ENCODE measurements at regions of chr10 and their contacts with region 1.

Region 1: DNA sequence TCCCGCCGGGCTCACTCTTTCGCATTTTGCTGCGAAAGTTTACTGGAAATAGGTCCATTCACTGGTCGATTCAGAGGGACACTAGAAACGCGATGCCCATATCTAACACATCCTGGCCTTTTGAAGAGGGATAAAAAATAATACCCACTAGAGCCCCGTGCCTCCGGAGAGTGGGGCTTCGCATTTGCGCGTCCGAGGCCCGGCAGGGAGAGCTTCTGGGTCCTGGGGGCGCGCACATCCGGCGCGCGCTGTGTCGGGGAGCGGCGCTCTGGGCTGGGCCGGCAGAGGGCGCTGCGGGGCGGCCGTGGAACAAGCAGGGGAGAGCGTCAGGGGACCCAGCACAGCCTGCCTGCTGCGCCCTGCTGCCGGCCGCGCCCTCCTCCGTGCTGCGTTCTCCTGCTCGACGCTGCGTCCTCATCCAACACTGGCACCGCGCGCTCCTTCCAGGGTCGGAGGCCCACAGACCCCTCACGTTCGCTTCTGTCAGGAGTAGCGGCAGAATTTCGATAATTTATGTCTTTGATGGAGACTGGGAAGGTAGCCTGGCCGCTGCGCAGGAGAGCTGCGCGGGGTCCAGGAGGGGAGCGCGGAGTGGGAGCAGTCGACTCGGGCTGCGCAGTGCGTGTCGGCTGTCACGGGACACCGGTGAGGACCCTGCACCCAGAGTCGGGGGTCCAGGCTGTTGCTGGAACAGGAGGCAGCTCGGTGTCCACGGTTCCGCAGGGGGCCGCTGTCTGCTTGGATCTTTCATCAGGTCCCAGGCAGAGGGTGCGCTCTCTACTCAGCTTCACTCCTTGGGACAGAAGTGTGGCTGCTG is 41.5 kb upstream of the ZNF32 start:
- DNase-seq: no peak
- H3K4me3 ChIP-seq: peak overlapping the region; percentile 69
- CTCF ChIP-seq: peak; percentile 90

Region 2: GRCh38 chr10:42911359-42911758 is 778.8 kb before region 1 on chr10:
- CTCF ChIA-PET with region 1: no interaction called
- POLR2A ChIA-PET with region 1: no interaction called
- DNase-seq: no peak
- H3K4me3 ChIP-seq: no peak overlapping the region
- CTCF ChIP-seq: no peak

Region 3: DNA sequence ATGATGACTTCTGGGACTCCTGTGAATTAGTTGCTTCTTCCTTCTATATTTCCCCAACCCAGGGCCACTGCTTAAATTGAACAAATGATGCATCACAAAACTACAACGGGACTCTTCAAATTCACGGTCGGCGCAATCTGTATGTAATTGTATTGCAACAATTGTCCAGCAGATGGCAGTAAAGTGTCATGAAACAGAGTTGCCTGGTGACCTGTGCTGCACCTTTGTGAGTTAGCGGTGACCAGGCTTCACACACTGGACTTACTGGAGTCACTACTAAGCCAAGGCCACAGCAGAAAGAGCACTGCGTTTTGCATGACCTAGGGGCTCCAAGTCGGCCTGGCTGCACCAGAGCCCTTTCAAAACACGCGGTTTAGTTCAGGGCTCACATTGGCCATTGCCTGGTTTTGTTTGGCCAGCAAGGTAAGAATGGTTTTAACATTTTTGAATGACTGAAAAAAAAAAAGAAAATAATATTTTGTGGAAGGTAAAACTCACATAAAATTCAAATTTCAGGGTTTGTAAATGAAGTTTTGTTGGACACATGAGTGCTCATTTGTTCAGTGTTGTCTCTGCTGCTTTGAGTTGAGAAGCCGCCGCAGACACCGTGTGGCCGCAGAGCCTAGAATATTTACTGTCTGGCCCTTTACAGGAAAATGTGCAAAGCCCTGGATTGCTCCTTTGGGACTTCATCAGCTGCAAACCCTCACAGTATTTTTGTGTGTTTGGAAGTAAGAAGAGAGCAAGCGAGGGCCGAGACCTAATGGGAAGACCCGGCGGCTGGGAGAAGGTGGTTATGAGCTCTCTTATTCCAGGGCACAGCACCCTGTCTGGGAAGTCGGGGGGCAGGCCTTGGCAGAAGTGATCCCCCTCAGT is 18.3 kb before region 1 on chr10:
- CTCF ChIA-PET with region 1: interaction called, 10 read pairs
- POLR2A ChIA-PET with region 1: no interaction called
- DNase-seq: no peak
- H3K4me3 ChIP-seq: no peak overlapping the region
- CTCF ChIP-seq: peak; percentile 56

Region 4: GRCh38 chr10:43808136-43808535 is 118.0 kb after region 1 on chr10:
- CTCF ChIA-PET with region 1: interaction called, 11 read pairs
- POLR2A ChIA-PET with region 1: interaction called, 3 read pairs
- DNase-seq: no peak
- H3K4me3 ChIP-seq: no peak overlapping the region
- CTCF ChIP-seq: no peak

Region 5: GRCh38 chr10:43861966-43862751 is 172.0 kb after region 1 on chr10:
- CTCF ChIA-PET with region 1: interaction called, 16 read pairs
- POLR2A ChIA-PET with region 1: interaction called, 6 read pairs
- DNase-seq: peak; percentile 94
- H3K4me3 ChIP-seq: no peak overlapping the region
- CTCF ChIP-seq: no peak

Region 6: DNA sequence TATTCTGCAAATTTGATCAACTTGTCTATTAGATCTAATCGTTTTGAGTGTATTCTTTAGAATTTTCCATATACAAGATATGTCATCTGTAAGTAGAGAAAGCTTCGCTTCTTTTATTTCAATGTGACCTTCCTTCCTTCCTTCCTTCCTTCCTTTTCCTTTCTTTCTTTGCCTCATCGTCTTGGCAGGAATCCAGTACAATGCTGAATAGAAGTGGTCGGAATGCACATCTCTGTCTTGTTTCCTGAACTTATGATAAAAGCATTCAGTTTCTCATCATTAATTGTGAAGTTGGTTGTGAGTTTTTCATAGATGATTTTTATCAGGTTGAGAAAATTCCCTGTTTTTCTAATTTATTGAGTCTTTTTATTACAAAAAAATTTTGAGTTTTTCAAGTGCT is 259.2 kb after region 1 on chr10:
- CTCF ChIA-PET with region 1: no interaction called
- POLR2A ChIA-PET with region 1: no interaction called
- DNase-seq: no peak
- H3K4me3 ChIP-seq: no peak overlapping the region
- CTCF ChIP-seq: no peak

Region 7: DNA sequence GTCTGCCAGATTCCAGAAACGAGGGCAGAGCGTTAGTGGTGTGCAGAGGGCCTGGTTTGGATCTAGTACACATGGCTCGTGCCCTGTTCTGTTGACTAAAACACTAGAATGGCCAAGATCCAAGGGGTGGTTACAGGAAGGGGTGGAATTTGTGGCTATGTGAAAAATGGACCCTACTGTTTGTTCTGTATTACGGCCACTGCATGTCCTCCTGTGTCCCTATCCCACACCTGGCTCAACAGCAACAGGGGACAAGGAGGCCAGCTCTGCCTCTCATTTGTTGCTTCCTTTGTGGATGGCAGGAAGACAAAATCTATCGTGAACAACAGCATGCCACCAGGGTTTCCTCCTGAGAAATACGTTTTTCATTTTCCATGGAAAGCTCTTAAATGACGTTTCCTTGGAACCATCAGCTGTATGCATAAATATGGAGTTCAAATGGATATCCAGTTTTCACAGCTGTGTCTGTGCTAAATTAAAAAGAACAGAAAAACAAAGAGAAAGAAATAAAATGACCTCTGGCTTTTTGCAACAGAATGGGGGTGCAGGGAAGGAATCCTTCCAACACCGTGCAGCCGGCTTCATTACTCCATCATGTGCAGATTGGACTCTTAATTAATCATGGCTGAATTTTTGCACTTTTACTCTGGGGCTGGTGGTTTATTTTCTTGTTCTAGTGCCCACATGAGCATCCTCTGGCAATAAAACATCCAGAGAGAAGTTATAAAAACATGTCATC is 375.8 kb after region 1 on chr10:
- CTCF ChIA-PET with region 1: interaction called, 11 read pairs
- POLR2A ChIA-PET with region 1: no interaction called
- DNase-seq: no peak
- H3K4me3 ChIP-seq: no peak overlapping the region
- CTCF ChIP-seq: no peak

Region 8: GRCh38 chr10:44386546-44387052 is 696.4 kb after region 1 on chr10:
- CTCF ChIA-PET with region 1: interaction called, 87 read pairs
- POLR2A ChIA-PET with region 1: interaction called, 5 read pairs
- DNase-seq: no peak
- H3K4me3 ChIP-seq: peak overlapping the region; percentile 42
- CTCF ChIP-seq: peak; percentile 88